ENCODE measurements at regions of chr9 and their contacts with region 1.

Region 1: DNA sequence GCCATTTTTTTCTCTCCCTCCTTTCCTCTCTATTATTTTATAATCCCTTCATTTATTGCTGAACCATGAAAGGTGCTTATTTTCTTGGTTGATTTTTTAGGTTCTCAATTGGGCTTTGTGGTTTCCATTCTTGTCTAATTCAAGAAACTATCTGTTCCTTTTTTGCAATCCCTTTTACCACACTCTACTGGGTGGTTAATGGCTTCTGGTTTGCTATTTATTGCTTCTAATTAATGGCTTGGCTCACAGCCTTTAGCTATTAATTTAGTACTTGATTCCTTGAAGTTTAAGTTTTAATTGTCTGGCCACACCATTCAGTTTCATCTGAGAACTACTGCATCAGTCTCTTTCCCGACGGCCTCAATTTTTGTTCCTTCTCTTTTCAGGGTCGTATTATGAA is 5.6 kb downstream of the FRRS1L start:
- DNase-seq: no peak
- H3K4me3 ChIP-seq: no peak overlapping the region
- H3K27ac ChIP-seq: no peak overlapping the region
- H3K4me1 ChIP-seq: peaks cover 0 to 2% (median 0%) of the 10 kb centered on the region in 4 experiments; a peak in 2 of 7 replicates
- H3K27me3 ChIP-seq: peaks cover 0 to 9% (median 5%) of the 10 kb centered on the region in 4 experiments; a peak in 6 of 7 replicates
- CTCF ChIP-seq: no peak
- EP300 ChIP-seq: no peak
- POLR2A ChIP-seq: no peak
- RAD21 ChIP-seq: no peak

Region 2: DNA sequence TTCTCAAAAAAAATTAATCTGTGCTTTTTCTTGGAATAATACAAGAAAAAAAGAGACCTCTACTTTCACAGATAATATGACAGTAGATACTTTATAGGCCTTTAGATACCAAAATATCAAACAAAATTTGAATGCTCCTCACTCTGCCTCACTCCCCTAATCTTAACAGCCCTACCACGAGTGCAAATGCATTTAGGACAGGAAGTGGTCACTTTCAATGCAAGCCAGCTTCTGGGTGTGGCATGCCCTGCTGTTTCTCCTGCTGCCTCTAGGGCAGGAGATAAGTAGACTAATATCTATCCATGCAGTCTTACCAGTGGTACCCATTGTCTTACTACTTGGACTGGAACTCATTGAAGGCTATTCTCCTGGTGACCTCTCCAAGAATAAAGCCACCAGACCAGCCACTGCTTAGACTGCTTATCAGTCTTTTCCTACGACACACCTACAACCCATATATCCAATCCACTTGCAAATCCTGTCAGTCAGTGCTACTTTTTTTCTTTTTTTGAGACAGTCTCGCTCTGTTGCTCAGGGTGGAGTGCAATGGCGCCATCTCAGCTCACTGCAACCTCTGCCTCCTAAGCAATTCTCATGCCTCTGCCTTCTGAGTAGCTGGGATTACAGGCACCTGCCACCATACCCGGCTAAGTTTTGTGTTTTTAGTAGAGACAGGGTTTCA is 17.4 kb before region 1 on chr9:
- CTCF ChIA-PET with region 1: interaction called, 12 read pairs
- POLR2A ChIA-PET with region 1: no interaction called
- DNase-seq: no peak
- H3K4me3 ChIP-seq: no peak overlapping the region
- H3K27ac ChIP-seq: no peak overlapping the region
- H3K4me1 ChIP-seq: no peaks in the 10 kb centered on the region
- H3K27me3 ChIP-seq: no peaks in the 10 kb centered on the region
- CTCF ChIP-seq: peak in 2 of 3 experiments; percentile 31 to 43; a peak in 2 of 4 replicates
- EP300 ChIP-seq: no peak
- POLR2A ChIP-seq: no peak
- RAD21 ChIP-seq: no peak

Measured in H1 (cell line).